ENCODE measurements at regions of chr4 and their contacts with region 1.

Region 1: DNA sequence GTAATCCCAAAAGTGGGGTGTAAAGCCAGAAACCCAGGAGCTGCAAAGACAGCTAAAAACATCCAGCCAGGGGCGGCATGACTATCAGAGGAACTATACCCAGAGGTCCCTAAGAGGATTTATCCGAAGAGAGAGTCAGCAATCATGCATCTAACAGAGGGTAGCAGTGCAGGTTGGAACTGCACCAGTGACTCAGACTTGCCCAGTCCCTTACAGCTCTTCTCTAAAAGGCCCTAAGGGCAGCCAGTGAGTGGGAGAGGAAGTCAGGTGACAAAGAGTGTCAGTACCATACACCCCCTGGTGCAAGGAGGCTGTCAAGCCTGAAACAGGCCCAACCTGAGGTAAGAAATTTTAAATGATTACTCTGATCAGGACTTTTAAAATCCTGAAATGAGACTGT is 88.1 kb downstream of the CAMK2D start:
- DNase-seq: peak; percentile 59
- ATAC-seq: peak; percentile 92
- H3K4me3 Mint-ChIP-seq: no peak overlapping the region
- H3K27ac Mint-ChIP-seq: peak overlapping the region; percentile 64
- H3K4me1 Mint-ChIP-seq: peaks cover 36% of the 10 kb centered on the region
- H3K27me3 Mint-ChIP-seq: no peaks in the 10 kb centered on the region

Region 2: GRCh38 chr4:113547487-113548042 is 125.9 kb before region 1 on chr4:
- CTCF ChIA-PET with region 1: interaction called, 21 read pairs
- POLR2A ChIA-PET with region 1: interaction called, 3 read pairs
- DNase-seq: peak; percentile 95
- ATAC-seq: peak; percentile 100
- H3K4me3 Mint-ChIP-seq: peak overlapping the region; percentile 18
- H3K27ac Mint-ChIP-seq: peak overlapping the region; percentile 4
- H3K4me1 Mint-ChIP-seq: peaks cover 15% of the 10 kb centered on the region
- H3K27me3 Mint-ChIP-seq: no peaks in the 10 kb centered on the region

Region 3: DNA sequence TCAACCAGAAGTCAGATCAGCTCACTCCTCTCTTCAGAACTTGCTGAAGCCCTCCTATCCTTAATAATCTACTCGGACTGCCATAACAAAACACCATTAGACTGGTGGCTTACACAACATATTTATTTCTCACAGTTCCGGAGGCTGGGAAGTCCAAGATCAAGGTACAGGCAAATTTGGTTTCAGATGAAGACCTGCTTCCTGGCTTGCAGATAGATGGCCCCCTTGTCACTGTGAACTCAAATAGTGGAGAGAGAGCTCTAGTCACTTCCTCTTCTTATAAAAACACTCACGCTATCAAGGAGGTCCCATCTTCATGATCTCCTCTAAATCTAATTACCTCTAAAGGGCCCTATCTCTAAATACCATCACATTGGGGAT is 37.0 kb before region 1 on chr4:
- CTCF ChIA-PET with region 1: interaction called, 20 read pairs
- POLR2A ChIA-PET with region 1: interaction called, 3 read pairs
- DNase-seq: peak; percentile 51
- ATAC-seq: peak; percentile 85
- H3K4me3 Mint-ChIP-seq: peak overlapping the region; percentile 64
- H3K27ac Mint-ChIP-seq: peak overlapping the region; percentile 88
- H3K4me1 Mint-ChIP-seq: peaks cover 45% of the 10 kb centered on the region
- H3K27me3 Mint-ChIP-seq: no peaks in the 10 kb centered on the region

Region 4: GRCh38 chr4:113653871-113654270 is 19.6 kb before region 1 on chr4:
- CTCF ChIA-PET with region 1: interaction called, 12 read pairs
- POLR2A ChIA-PET with region 1: no interaction called
- DNase-seq: no peak
- ATAC-seq: no peak
- H3K4me3 Mint-ChIP-seq: no peak overlapping the region
- H3K27ac Mint-ChIP-seq: no peak overlapping the region
- H3K4me1 Mint-ChIP-seq: peaks cover 6% of the 10 kb centered on the region
- H3K27me3 Mint-ChIP-seq: no peaks in the 10 kb centered on the region

Region 5: GRCh38 chr4:113684534-113685091 is 11.2 kb after region 1 on chr4:
- CTCF ChIA-PET with region 1: interaction called, 11 read pairs
- POLR2A ChIA-PET with region 1: interaction called, 3 read pairs
- DNase-seq: no peak
- ATAC-seq: peak; percentile 39
- H3K4me3 Mint-ChIP-seq: peak overlapping the region; percentile 51
- H3K27ac Mint-ChIP-seq: peak overlapping the region; percentile 84
- H3K4me1 Mint-ChIP-seq: peaks cover 65% of the 10 kb centered on the region
- H3K27me3 Mint-ChIP-seq: no peaks in the 10 kb centered on the region

Region 6: GRCh38 chr4:113695328-113696169 is 22.1 kb after region 1 on chr4:
- CTCF ChIA-PET with region 1: no interaction called
- POLR2A ChIA-PET with region 1: no interaction called
- DNase-seq: no peak
- ATAC-seq: no peak
- H3K4me3 Mint-ChIP-seq: no peak overlapping the region
- H3K27ac Mint-ChIP-seq: no peak overlapping the region
- H3K4me1 Mint-ChIP-seq: peaks cover 22% of the 10 kb centered on the region
- H3K27me3 Mint-ChIP-seq: no peaks in the 10 kb centered on the region

Region 7: GRCh38 chr4:113945906-113946305 is 272.5 kb after region 1 on chr4:
- CTCF ChIA-PET with region 1: no interaction called
- POLR2A ChIA-PET with region 1: no interaction called
- DNase-seq: no peak
- ATAC-seq: no peak
- H3K4me3 Mint-ChIP-seq: no peak overlapping the region
- H3K27ac Mint-ChIP-seq: no peak overlapping the region
- H3K4me1 Mint-ChIP-seq: peaks cover 10% of the 10 kb centered on the region
- H3K27me3 Mint-ChIP-seq: peaks cover 2% of the 10 kb centered on the region

Measured in activated CD8-positive, alpha-beta T cell treated with anti-CD3 and anti-CD28 coated beads, Interleukin-2, amount 10 ng/mL, durations not matched to agents 7 days and 5 days (primary cell).